Natural killer cell (primary cell): ENCODE measurements at regions of chr1 and their contacts with region 1.

Region 1: DNA sequence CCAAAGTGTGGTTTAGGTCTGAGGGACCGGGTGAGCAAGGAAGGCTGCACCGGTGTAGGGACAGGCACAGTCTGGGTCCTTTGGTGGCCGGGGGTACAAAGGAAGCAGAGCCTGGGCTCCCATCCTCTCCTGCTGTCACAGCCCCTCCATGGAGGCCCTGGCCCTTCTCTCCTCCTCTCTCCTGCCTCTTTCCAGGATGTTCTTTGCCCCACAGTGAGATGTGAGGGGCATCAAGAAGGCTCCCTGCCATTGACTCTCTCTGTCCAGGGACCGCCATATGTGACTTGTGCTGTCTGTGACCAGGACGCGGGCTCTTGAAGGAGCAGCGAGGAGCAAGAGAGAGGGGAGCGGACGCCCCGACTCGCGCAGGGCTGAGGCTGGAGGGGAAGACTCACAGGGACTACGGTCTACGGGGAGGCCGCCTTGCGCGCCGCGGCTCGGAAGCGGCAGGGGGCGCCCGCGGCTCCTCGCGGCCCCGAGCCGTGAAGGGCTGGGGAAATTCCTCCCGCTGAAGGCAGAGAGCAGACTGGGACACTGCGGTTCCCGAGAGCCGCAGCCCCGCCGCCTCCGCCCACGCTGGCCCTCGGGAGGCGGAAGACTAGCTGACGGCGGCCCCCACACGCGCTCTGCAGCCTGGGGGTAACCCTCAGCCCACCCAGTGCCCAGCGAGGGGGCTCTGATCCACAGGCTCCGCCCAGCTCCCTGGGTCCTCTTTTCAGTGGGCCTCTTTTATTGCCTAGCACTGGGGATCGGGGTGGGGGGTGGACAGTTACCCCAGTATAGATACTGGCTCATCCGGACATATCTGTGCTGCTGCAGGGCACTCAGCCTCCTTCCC is 40.8 kb downstream of the MAB21L3 start:
- DNase-seq: peak; percentile 79 to 92
- ATAC-seq: peak; percentile 96 to 97 (median 96)
- H3K4me3 ChIP-seq: peak overlapping the region; percentile 18
- H3K4me3 Mint-ChIP-seq: peak overlapping the region; percentile 64
- H3K27ac ChIP-seq: no peak overlapping the region
- H3K27ac Mint-ChIP-seq: peak overlapping the region in 1 of 2 donors; percentile 87
- H3K4me1 ChIP-seq: peaks cover 10% of the 10 kb centered on the region
- H3K4me1 Mint-ChIP-seq: peaks cover 6 to 10% of the 10 kb centered on the region in 2 donors
- H3K27me3 ChIP-seq: no peaks in the 10 kb centered on the region
- H3K27me3 Mint-ChIP-seq: peaks cover 5 to 10% of the 10 kb centered on the region in 2 donors
- CTCF ChIP-seq: peak; percentile 85

Region 2: DNA sequence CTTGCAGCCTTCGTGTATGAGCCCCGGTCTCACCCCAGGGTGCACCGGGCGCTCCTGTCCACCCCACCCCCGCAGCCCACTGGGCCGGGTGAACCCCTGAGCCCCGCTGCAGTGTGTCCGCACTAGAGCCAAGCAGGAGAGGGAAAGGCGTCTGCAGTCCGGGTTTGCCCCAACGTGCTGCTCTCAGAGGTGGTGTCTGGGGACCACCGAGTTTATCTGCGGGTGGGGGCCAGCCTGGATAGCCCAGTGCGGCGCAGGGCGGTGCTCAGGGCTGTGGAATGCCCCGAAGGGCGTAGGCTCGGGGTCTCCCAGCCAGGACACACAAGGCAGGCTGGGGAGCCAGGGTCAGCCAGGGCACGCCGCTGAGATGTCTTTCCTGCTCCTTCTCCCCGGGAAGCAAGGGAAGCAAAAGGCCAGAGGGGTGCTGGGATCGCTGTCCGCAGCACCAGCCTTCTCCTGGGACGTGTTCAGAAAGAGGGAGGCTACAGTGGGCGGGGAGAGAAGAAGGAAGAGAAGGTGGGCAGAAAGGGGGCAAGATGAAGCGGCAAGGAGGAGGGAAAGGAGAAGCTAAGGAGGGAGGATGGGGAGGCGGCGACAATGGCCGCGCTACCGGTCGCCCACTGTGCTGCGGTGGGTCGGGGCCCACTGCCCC is 15.8 kb after region 1 on chr1:
- intact Hi-C with region 1: loop called (anchors 2 kb)
- DNase-seq: no peak
- ATAC-seq: peak in 1 of 3 donors; percentile 5
- H3K4me3 ChIP-seq: peak overlapping the region; percentile 47
- H3K4me3 Mint-ChIP-seq: peak overlapping the region; percentile 77
- H3K27ac ChIP-seq: peak overlapping the region; percentile 19
- H3K27ac Mint-ChIP-seq: peak overlapping the region; percentile 68 to 84
- H3K4me1 ChIP-seq: peaks cover 18% of the 10 kb centered on the region
- H3K4me1 Mint-ChIP-seq: peaks cover 21% of the 10 kb centered on the region in 2 donors
- H3K27me3 ChIP-seq: no peaks in the 10 kb centered on the region
- H3K27me3 Mint-ChIP-seq: no peaks in the 10 kb centered on the region
- CTCF ChIP-seq: no peak

Region 3: DNA sequence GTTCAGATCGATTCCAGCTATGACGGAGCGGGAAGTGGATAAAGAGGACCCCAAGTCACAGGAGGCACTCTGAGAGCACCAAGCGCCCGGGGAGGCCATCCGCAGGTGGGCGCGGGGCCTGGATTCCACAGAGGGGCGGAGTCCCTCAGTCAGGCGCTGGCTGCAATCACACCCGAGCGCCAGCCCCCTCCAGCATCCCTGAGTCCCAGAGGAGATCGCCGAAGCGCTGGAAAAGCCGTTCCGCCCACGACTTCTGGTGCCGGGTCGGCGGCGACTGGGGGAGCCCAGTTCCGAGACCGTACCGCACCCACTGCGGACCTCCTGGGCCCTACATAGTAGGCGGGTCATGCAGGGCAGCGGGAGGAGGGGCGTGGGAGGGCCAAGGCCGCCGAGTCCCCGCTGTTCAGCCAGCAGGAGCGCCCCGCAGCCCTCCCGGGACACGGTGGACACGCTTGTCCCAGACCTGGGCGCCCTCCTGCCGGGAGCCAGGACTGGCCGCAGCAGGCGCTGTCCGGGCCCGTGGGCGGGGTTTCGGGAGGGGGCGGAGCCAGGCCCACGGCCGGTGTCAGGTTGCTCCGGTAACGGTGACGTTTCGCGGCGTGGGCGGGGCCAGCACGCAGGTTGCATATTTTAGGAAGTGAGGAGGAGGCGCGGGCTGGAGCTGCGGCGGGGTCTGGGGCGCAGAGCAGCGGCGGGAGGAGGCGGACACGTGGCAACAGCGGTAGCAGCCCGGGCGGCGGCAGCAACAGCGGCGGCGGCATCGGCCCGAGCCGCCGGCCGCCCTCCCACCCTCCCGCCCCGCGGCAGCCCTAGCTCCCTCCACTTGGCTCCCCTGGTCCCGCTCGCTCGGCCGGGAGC is 220.9 kb after region 1 on chr1 and contains the start of gene ATP1A1:
- intact Hi-C with region 1: loop called (anchors 10 kb)
- DNase-seq: peak; percentile 98 to 99
- ATAC-seq: peak; percentile 80 to 93 (median 89)
- H3K4me3 ChIP-seq: peak within 1 kb of the TSS; percentile 75
- H3K4me3 Mint-ChIP-seq: peak within 1 kb of the TSS; percentile 95
- H3K27ac ChIP-seq: peak within 1 kb of the TSS; percentile 86
- H3K27ac Mint-ChIP-seq: peak within 1 kb of the TSS; percentile 88 to 93
- H3K4me1 ChIP-seq: peaks cover 39% of the 10 kb centered on the region
- H3K4me1 Mint-ChIP-seq: peaks cover 45 to 50% of the 10 kb centered on the region in 2 donors
- H3K27me3 ChIP-seq: no peaks in the 10 kb centered on the region
- H3K27me3 Mint-ChIP-seq: no peaks in the 10 kb centered on the region
- CTCF ChIP-seq: no peak
- total RNA-seq, gene ATP1A1: 134 to 144 (median 140) TPM

Region 4: DNA sequence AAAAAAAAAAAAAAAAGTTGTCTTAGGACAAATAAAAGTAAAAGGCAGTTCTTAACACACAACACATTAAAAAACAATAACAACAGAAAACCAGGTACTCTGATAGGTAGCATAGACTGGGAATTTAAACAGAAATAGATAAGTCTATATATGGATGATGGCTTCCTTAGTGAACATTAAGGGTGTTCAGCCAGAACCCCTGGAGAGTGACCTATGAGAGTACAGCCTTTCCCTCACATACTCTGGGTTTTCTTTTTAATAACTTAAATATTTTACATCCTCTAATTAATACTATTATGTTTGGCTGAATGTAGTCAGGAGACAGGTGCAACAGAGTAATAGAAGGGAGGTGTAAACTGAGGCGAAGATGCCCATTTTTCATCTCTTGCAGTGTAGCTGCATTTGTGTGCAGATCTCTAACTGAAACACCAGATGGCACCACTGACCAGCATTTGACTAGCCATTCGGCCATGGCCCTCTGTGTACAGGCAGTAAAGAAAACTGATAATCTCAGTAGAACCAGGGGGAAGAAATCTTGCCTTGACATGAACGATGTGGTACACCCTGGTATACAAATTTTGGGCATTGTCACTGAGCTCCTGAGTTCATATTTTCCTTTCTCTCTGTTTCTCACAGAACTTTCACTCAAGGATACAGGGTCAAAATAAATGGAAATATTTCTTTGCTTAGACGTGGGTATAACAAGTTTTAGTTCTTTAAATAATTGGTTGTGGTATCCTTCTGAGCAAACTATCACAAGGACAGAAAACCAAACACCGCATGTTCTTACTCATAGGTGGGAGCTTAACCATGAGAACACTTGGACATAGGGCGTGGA is 915.8 kb after region 1 on chr1:
- intact Hi-C with region 1: no loop called
- DNase-seq: peak in 1 of 2 donors; percentile 63
- ATAC-seq: peak; percentile 73 to 96 (median 94)
- H3K4me3 ChIP-seq: no peak overlapping the region
- H3K4me3 Mint-ChIP-seq: no peak overlapping the region
- H3K27ac ChIP-seq: no peak overlapping the region
- H3K27ac Mint-ChIP-seq: no peak overlapping the region
- H3K4me1 ChIP-seq: no peaks in the 10 kb centered on the region
- H3K4me1 Mint-ChIP-seq: peaks cover 0 to 6% of the 10 kb centered on the region in 2 donors
- H3K27me3 ChIP-seq: no peaks in the 10 kb centered on the region
- H3K27me3 Mint-ChIP-seq: no peaks in the 10 kb centered on the region
- CTCF ChIP-seq: peak; percentile 65